Posterior cingulate gyrus (tissue), 11 donors: ENCODE measurements at regions of chr12 and their contacts with region 1.

Region 1: DNA sequence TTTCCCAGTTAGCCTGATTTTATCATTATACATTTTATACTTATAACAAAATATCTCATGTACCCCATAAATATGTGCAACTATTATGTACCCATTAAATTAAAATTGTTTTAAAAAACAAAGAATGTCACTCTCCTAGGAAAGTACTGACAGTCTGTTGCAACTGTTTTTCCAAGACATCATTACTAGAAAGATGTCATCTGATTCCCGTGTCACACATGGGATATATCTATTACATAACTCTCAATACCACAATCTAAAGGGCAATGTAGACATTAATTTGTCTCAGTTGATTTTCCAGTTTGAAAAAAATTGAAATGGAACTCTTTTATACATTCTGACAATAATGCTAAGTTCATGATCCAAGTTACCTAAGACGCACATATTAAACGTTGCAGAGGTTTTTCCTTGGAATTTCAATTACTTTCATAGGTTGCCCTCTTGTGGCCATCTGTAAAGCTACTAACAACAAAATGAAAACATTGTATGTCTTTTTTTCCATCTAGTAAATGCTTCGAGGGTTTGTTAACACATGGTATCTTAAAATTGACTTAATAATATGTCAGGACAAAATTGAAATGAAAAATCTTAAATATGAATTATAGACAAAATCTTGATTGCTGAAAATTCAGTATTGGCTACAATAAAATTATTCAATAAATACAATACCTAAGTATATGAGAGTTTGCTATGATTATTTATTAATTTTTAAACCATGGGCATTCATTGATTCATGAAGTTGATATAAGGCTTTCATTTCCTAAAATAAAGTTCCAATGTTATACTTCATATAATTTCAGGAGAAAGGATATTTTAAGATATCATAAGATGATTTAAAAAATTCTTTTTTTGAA is 131.6 kb downstream of the PPFIA2 start:
- DNase-seq: no peak

Region 2: DNA sequence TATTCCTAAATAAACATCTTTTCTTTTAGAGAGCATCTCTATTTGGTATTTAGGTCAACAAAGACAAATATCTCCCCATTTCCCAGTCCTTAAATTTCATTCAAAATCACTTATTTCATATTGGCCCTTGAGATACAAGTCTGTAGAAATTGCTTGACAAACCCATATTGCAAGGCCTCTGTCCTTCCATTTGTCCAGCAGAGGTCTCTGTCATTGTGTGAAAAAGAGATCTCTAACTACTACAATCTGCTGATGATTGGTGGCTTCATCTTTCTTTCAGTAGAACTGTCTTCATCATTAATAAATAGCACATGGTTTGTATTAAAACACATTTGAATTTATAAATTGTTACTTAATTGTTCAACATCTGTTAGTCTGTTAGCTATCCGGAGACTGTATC is 297.1 kb before region 1 on chr12:
- intact Hi-C with region 1: loop called (anchors 1 kb)
- DNase-seq: no peak

Region 3: DNA sequence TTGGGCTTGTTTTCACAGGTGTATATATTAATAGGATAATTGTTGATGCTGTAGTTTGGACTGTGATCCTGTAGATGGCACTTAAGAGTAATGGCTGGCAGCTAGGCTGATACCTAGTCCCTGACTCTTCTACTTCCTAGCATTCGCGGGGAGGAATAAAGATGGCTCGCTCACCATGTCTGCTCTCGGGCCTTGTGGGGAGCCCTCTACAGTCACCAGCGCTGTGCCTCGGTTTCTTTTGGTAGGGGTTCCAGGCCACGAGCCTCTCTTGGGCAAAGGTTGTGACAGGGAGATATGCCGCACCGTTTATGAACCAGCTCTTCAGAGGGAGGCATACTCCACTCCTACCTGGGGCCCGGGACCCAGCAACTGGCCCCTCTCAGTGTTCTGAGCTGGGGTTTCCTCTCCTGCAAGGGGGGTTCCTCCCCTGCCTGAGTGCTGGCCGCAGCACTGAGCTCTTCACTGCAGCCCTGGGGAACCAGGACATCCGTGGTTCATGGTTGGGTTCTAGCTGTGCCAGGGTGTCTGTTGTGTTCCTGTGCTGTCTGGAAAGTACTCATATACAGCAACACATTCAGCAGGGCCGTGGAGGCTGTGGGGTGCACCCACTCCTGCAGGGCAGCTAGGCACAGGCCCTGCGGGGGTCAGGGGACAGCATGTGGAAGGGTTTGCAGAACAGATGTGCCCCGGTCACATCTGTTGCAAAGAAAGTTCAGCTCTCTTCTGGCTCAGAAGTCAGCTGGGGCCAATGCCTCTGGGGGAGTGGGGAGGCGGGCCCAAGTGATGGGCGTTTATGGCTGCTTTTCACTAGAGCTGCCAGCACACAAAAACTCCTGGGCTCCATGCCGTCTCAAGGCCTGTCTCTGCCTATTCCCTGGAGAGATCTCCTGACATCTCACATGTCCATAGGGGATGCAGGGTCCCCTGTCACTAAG is 16.3 kb before region 1 on chr12:
- intact Hi-C with region 1: no loop called
- DNase-seq: peak in 2 of 10 donors; percentile 48 to 69